Sigmoid colon (tissue), 7 donors: ENCODE measurements at regions of chr7 and their contacts with region 1.

Region 1: GRCh38 chr7:158394936-158395335 is 192.7 kb downstream of the PTPRN2 start:
- DNase-seq: no peak
- H3K4me3 ChIP-seq: no peak overlapping the region
- H3K27ac ChIP-seq: no peak overlapping the region
- H3K4me1 ChIP-seq: peaks cover 0 to 8% (median 0%) of the 10 kb centered on the region in 4 donors
- H3K27me3 ChIP-seq: no peaks in the 10 kb centered on the region
- CTCF ChIP-seq: peak; percentile 22 to 75 (median 71)
- EP300 ChIP-seq: no peak
- POLR2A ChIP-seq: no peak

Region 2: DNA sequence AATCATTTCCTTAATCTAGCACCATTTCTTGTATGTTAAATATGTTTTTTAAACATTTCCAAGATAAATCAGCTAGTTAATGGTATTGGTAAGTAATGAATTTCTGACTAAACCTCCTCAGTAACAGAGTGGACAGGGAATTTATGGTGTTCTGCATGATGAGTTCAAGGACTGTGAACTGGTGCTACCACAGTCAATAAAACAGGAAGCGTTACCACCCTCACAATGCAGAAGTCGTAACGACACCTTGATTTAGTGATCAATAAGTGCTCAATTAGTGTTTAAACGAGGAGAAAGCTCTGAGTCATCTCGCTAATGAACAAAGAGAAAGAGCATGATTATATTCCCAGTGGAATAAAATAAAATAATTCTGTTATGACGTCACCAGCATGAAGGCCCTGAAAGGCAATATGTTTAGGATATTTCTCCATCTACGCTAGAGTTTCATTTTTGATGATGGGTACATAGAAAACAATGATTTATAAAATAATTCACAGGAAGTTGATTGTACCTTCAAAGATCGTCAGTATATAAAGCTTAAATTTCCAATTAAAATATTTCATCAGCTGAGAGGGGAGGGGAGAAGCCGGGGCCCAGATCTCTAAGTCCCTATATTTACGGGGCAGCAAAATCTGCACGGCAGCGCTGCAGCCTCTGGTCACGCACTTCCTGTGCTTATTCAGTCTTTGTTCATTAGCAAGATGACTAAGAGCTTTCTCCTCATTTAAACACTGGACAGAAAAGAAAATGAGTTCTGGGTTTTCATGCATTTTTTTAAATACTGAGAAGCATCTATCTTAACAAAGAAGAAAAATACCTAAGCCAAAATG is 207.9 kb before region 1 on chr7:
- intact Hi-C with region 1: no loop called
- DNase-seq: no peak
- H3K4me3 ChIP-seq: no peak overlapping the region
- H3K27ac ChIP-seq: no peak overlapping the region
- H3K4me1 ChIP-seq: no peaks in the 10 kb centered on the region
- H3K27me3 ChIP-seq: no peaks in the 10 kb centered on the region
- CTCF ChIP-seq: no peak
- EP300 ChIP-seq: no peak
- POLR2A ChIP-seq: no peak

Region 3: GRCh38 chr7:158252072-158252836 is 142.7 kb before region 1 on chr7:
- intact Hi-C with region 1: no loop called
- DNase-seq: peak; percentile 50
- H3K4me3 ChIP-seq: no peak overlapping the region
- H3K27ac ChIP-seq: no peak overlapping the region
- H3K4me1 ChIP-seq: no peaks in the 10 kb centered on the region
- H3K27me3 ChIP-seq: no peaks in the 10 kb centered on the region
- CTCF ChIP-seq: no peak
- EP300 ChIP-seq: no peak
- POLR2A ChIP-seq: no peak

Region 4: DNA sequence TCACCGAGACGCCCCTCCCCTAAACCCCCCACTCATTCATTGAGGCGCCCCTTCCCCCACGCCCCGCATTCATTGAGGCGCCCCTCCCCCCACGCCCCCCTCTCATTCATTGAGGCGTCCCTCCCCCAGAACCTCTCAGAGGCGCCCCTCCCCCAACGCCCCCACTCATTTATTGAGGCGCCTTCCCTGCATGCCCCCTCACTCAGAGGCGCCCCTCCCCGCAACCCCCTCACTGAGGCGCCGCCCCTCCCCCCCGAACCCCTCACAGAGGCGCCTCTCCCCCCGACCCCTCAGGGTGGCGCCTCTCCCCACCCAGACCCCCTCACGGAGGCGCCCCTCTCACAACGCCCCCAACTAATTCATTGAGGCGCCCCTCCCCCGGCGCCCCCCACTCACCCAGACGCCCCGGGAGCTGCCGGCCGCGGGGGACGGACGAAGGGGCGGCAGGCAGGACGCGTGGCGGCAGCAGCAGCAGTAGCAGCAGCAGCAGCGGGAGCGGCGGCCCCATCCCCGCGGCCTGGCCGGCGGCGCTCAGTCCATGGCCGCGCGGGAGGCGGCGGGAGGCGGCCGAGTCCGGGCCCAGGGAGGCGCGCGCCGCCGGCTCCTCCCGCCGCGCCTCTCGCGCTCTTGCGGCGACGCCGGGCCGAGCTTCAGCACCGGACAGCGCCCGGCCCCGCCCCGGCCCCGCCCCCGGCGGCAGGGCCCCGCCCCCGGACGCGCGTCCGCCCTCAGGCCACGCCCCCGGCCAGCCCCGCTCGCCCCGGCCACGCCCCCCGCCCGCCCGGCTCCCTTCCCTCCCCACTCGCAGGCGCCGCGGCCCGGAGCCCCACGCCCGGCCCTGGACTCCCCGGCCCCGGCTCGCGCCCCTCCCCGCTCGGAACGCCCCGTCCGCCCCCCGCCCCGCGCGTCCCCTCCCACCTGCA is 192.5 kb after region 1 on chr7 and contains the start of gene PTPRN2:
- intact Hi-C with region 1: loop called (anchors 5 kb)
- DNase-seq: peak; percentile 70
- H3K4me3 ChIP-seq: peak within 1 kb of the TSS in 3 of 4 donors; percentile 46 to 58 (median 53)
- H3K27ac ChIP-seq: peak within 1 kb of the TSS in 1 of 4 donors; percentile 21
- H3K4me1 ChIP-seq: peaks cover 0 to 28% (median 26%) of the 10 kb centered on the region in 4 donors
- H3K27me3 ChIP-seq: peaks cover 2 to 45% (median 28%) of the 10 kb centered on the region in 3 donors
- CTCF ChIP-seq: no peak
- EP300 ChIP-seq: no peak
- POLR2A ChIP-seq: no peak
- total RNA-seq, gene PTPRN2: 4.9 to 7.1 (median 5.4) TPM